ENCODE measurements at regions of chr3 and their contacts with region 1.

Region 1: DNA sequence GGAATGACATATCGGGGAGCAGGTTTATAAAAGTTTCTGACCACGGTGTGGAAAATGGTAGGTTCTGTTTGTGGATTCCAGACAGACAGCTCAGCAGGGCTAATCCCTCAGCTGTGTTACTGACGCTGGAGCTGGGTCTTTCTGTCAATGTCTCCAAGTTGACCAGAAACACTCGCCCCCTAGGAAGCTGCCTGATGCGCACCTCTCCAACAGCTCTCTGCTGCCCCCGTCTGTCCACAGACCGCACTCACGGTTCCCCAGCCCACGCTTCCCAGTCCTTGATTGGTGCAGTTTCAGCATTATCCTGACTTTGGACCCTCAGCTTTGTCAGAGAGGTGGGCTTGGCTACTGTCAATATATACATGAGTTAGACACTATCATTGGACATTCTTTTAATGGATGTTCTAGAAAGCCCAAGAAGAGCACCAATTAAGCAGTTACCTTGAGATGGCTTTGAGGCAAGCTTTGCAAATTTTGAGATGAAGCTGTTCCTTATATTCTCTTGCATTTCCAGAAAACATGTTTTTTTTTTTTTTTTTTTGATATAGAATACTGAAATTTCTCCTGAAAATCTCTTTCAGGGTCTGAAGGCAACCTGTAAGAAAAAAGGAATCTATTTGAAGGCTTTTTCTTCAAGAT is 98.9 kb upstream of the TBC1D5 start:
- DNase-seq: no peak
- H3K4me3 ChIP-seq: no peak overlapping the region
- H3K27me3 ChIP-seq: no peaks in the 10 kb centered on the region
- CTCF ChIP-seq: peak; percentile 98

Region 2: GRCh38 chr3:17423786-17424536 is 417.3 kb before region 1 on chr3:
- CTCF ChIA-PET with region 1: interaction called, 67 read pairs
- POLR2A ChIA-PET with region 1: no interaction called
- DNase-seq: no peak
- H3K4me3 ChIP-seq: no peak overlapping the region
- H3K27me3 ChIP-seq: no peaks in the 10 kb centered on the region
- CTCF ChIP-seq: no peak

Region 3: DNA sequence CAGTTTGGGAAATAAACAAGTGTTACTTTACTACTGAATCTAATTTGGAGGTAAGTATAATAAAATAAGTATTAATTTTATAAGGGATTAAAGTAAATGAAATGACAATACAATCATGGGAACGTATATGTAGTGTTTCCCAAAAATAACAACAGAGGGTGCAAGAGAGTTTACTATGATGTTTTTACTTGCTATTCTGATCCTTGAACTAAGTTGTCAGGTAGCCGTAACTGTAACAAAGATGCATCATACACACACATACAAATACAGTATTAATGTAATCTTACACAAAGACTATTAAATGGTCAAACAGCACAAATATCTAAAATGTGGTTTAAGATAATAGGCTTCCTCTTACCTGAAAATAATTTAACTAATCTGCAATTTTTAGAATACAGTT is 410.3 kb before region 1 on chr3:
- CTCF ChIA-PET with region 1: interaction called, 67 read pairs
- POLR2A ChIA-PET with region 1: no interaction called
- DNase-seq: no peak
- H3K4me3 ChIP-seq: no peak overlapping the region
- H3K27me3 ChIP-seq: no peaks in the 10 kb centered on the region
- CTCF ChIP-seq: peak; percentile 39; the same call in 1 of the 2 replicates

Region 4: DNA sequence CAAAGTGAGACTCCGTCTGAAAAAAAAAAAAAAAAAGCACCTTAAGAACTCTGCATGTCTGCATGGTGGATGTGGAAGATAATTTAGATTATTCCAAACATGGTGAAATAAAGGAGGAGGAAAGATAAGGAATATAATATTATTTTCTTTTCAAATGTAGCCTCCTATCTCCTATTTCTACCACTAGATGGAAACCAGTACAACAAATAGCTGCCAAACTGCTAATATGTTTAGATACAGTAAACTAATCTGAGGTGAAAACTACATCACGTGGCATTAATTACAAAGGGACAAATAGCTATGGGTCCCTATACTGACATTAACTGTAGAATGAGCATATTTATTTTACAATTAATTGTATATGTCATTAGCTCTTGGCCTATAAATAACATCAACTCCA is 296.7 kb before region 1 on chr3:
- CTCF ChIA-PET with region 1: interaction called, 11 read pairs
- POLR2A ChIA-PET with region 1: no interaction called
- DNase-seq: no peak
- H3K4me3 ChIP-seq: no peak overlapping the region
- H3K27me3 ChIP-seq: no peaks in the 10 kb centered on the region
- CTCF ChIP-seq: 0 out of 2 replicates have a peak, but pooled peaks have one; percentile 20

Region 5: DNA sequence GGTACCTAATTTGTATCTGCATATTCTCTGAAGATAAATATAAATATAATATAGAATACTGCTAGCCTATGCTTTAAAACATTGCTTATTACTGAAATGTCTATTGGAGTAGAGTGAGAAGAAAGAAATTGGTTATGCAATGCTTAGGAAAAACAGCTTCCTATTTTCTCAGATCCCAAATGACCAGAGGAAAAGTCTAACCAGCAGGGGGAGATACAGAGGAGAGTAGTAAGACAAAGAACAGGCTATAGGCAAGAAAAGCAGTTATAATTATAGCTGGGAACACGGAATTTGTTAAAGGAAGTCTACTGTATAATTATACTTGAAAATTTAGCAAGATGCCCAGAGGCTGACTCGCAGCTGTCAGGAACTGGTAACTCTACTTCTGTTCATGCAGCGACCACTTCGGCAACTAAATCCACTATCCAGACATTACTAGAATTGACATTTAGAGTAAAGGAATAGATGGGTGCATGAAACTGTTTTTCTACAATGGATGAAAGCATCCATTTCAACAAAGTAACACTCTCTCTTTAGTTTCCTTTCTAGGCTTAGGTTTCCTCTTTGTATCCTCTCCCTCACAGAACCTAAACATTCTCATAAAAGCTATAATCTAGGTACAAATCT is 196.1 kb before region 1 on chr3:
- CTCF ChIA-PET with region 1: interaction called, 43 read pairs
- POLR2A ChIA-PET with region 1: no interaction called
- DNase-seq: no peak
- H3K4me3 ChIP-seq: no peak overlapping the region
- H3K27me3 ChIP-seq: no peaks in the 10 kb centered on the region
- CTCF ChIP-seq: peak; percentile 76

Region 6: DNA sequence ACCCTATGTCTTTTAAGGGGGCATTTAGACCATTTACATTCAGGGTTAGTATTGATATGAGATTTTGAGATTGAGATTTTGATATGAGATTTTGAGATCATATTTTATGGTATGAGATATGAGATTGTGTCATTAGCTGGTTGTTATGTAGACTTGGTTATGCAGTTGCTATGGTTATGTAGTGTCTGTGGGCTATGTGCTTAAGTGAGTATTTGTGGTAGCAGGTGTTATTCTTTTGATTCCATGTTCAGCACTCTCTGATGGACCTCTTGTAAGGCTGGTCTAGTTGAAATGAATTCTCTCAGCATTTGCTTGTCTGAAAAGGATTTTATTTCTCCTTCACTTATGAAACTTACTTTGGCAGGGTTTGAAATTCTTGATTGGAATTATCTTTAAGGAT is 358.4 kb after region 1 on chr3:
- CTCF ChIA-PET with region 1: no interaction called
- POLR2A ChIA-PET with region 1: no interaction called
- DNase-seq: no peak
- H3K4me3 ChIP-seq: no peak overlapping the region
- H3K27me3 ChIP-seq: no peaks in the 10 kb centered on the region; the same call in 1 of the 2 replicates
- CTCF ChIP-seq: no peak

Measured in BJ (cell line).